ENCODE measurements at regions of chr4 and their contacts with region 1.

Region 1: GRCh38 chr4:36140421-36140820 is 103.9 kb downstream of the ARAP2 start:
- DNase-seq: no peak
- ATAC-seq: no peak
- H3K4me3 ChIP-seq: no peak overlapping the region
- H3K4me3 Mint-ChIP-seq: no peak overlapping the region
- H3K27ac ChIP-seq: no peak overlapping the region
- H3K27ac Mint-ChIP-seq: no peak overlapping the region
- H3K4me1 ChIP-seq: no peaks in the 10 kb centered on the region
- H3K4me1 Mint-ChIP-seq: peaks cover 0 to 11% (median 10%) of the 10 kb centered on the region in 3 donors
- H3K27me3 ChIP-seq: no peaks in the 10 kb centered on the region
- H3K27me3 Mint-ChIP-seq: no peaks in the 10 kb centered on the region

Region 2: GRCh38 chr4:36079666-36080065 is 60.8 kb before region 1 on chr4:
- CTCF ChIA-PET with region 1: no interaction called
- POLR2A ChIA-PET with region 1: interaction called in 1 of 2 experiments, 10 read pairs
- DNase-seq: no peak
- ATAC-seq: no peak
- H3K4me3 ChIP-seq: no peak overlapping the region
- H3K4me3 Mint-ChIP-seq: no peak overlapping the region
- H3K27ac ChIP-seq: no peak overlapping the region
- H3K27ac Mint-ChIP-seq: no peak overlapping the region
- H3K4me1 ChIP-seq: no peaks in the 10 kb centered on the region
- H3K4me1 Mint-ChIP-seq: no peaks in the 10 kb centered on the region
- H3K27me3 ChIP-seq: no peaks in the 10 kb centered on the region
- H3K27me3 Mint-ChIP-seq: no peaks in the 10 kb centered on the region

Region 3: GRCh38 chr4:36152735-36153134 is 12.3 kb after region 1 on chr4:
- CTCF ChIA-PET with region 1: no interaction called
- POLR2A ChIA-PET with region 1: no interaction called
- DNase-seq: no peak
- ATAC-seq: no peak
- H3K4me3 ChIP-seq: no peak overlapping the region
- H3K4me3 Mint-ChIP-seq: no peak overlapping the region
- H3K27ac ChIP-seq: no peak overlapping the region
- H3K27ac Mint-ChIP-seq: no peak overlapping the region
- H3K4me1 ChIP-seq: no peaks in the 10 kb centered on the region
- H3K4me1 Mint-ChIP-seq: peaks cover 0 to 3% (median 2%) of the 10 kb centered on the region in 3 donors
- H3K27me3 ChIP-seq: no peaks in the 10 kb centered on the region
- H3K27me3 Mint-ChIP-seq: no peaks in the 10 kb centered on the region

Measured in T-cell (primary cell).